MCF 10A (cell line): ENCODE measurements at regions of chr1 and their contacts with region 1.

Region 1: GRCh38 chr1:233326811-233327650 is 493 bp upstream of the MAP3K21 start:
- DNase-seq: peak; percentile 100
- H3K4me3 Mint-ChIP-seq: peak overlapping the region; percentile 87
- H3K27ac Mint-ChIP-seq: peak overlapping the region; percentile 58
- H3K4me1 Mint-ChIP-seq: peaks cover 39% of the 10 kb centered on the region
- H3K27me3 Mint-ChIP-seq: no peaks in the 10 kb centered on the region
- CTCF ChIP-seq: no peak

Region 2: DNA sequence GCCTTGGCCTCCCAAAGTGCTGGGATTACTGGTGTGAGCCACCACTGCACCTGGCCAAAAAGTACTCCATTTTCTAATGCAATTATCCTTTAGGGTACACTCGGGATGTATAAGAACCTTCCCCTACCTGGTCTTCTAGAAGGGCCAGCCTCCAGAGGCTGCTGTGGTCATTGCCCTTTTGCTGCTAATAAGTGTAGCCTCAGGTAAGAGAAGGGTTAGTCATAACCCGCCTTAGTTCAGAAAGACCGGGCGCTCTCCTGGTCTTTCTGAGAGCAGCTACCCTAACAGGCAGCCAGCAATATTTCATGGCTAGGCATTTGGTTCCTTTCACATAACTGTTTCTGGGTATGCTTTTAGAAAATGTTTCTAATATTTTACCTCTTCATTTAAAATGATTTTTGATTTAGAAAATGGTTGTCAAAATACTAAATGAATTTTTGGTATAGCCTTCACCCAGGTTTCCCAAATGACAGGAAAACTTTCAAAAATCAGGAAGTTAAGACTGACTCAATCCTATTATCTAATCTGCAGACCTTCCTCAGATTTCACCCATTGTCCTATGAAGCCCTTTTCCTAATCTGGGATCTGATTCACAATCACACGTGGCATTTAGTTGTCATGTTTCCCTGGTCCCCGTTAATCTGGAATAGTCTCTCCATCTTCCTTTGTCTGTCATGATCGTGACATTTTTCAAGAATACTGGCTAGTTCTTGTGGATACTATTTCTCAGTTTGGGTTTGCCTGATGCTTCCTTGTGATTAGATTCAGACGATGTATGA is 1176.1 kb before region 1 on chr1:
- CTCF ChIA-PET with region 1: no interaction called
- POLR2A ChIA-PET with region 1: no interaction called
- intact Hi-C with region 1: no loop called
- DNase-seq: peak; percentile 46
- H3K4me3 Mint-ChIP-seq: no peak overlapping the region
- H3K27ac Mint-ChIP-seq: no peak overlapping the region
- H3K4me1 Mint-ChIP-seq: peaks cover 10% of the 10 kb centered on the region
- H3K27me3 Mint-ChIP-seq: no peaks in the 10 kb centered on the region
- CTCF ChIP-seq: no peak

Region 3: DNA sequence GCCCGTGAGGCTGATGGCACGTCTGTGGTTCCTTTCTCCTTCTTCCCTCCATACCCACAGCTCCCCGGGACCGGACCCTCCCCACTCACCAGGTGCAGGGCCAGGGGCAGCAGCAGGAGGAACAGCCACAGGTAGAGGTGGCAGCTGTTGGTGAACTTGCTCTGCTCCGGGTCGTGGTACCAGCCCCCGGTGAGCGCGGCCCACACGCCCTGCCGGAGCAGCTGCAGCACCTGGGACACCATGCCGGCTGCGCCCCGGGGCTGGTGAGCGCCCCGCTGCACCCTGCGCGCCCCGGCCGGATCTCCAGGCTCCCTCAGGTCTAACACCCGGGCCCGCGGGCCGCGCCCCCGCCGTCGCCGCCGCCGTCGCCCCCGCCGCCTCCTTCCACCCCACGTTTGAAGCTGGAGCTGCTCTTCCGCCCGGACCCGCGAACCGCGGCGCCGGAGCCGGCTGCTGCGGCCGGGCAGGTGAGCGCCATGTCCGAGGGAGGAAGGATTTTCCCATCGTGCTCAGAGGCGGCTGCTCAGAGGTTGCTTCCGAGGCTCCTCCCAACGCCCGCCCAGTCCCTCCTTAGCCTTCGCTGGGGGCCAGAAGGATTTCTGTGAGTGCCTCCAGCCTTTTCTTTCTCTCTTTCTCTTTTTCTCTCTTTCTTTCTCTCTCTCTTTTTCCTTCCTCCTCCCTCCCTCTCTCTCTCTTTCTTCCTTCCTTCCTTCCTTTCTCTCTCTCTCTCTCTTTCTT is 31.6 kb before region 1 on chr1 and contains the start of gene PCNX2:
- CTCF ChIA-PET with region 1: interaction called, 4 read pairs
- POLR2A ChIA-PET with region 1: interaction called, 129 read pairs
- intact Hi-C with region 1: no loop called
- DNase-seq: peak; percentile 88
- H3K4me3 Mint-ChIP-seq: peak within 1 kb of the TSS; percentile 81
- H3K27ac Mint-ChIP-seq: peak within 1 kb of the TSS; percentile 68
- H3K4me1 Mint-ChIP-seq: peaks cover 28% of the 10 kb centered on the region
- H3K27me3 Mint-ChIP-seq: no peaks in the 10 kb centered on the region
- CTCF ChIP-seq: no peak
- total RNA-seq, gene PCNX2: 80.5 and 85.3 TPM in 2 replicates

Region 4: GRCh38 chr1:233341117-233341516 is 14.1 kb after region 1 on chr1:
- CTCF ChIA-PET with region 1: interaction called, 4 read pairs
- POLR2A ChIA-PET with region 1: interaction called, 82 read pairs
- intact Hi-C with region 1: no loop called
- DNase-seq: peak; percentile 50
- H3K4me3 Mint-ChIP-seq: no peak overlapping the region
- H3K27ac Mint-ChIP-seq: no peak overlapping the region
- H3K4me1 Mint-ChIP-seq: peaks cover 12% of the 10 kb centered on the region
- H3K27me3 Mint-ChIP-seq: no peaks in the 10 kb centered on the region
- CTCF ChIP-seq: no peak

Region 5: GRCh38 chr1:233355841-233356704 is 29.0 kb after region 1 on chr1:
- CTCF ChIA-PET with region 1: interaction called, 3 read pairs
- POLR2A ChIA-PET with region 1: interaction called, 14 read pairs
- intact Hi-C with region 1: no loop called
- DNase-seq: no peak
- H3K4me3 Mint-ChIP-seq: no peak overlapping the region
- H3K27ac Mint-ChIP-seq: no peak overlapping the region
- H3K4me1 Mint-ChIP-seq: peaks cover 6% of the 10 kb centered on the region
- H3K27me3 Mint-ChIP-seq: no peaks in the 10 kb centered on the region
- CTCF ChIP-seq: no peak

Region 6: GRCh38 chr1:233386336-233386735 is 59.3 kb after region 1 on chr1:
- CTCF ChIA-PET with region 1: interaction called, 4 read pairs
- POLR2A ChIA-PET with region 1: interaction called, 13 read pairs
- intact Hi-C with region 1: no loop called
- DNase-seq: peak; percentile 91
- H3K4me3 Mint-ChIP-seq: no peak overlapping the region
- H3K27ac Mint-ChIP-seq: no peak overlapping the region
- H3K4me1 Mint-ChIP-seq: peaks cover 6% of the 10 kb centered on the region
- H3K27me3 Mint-ChIP-seq: no peaks in the 10 kb centered on the region
- CTCF ChIP-seq: no peak

Region 7: GRCh38 chr1:233554037-233554436 is 227.0 kb after region 1 on chr1:
- CTCF ChIA-PET with region 1: no interaction called
- POLR2A ChIA-PET with region 1: no interaction called
- intact Hi-C with region 1: no loop called
- DNase-seq: no peak
- H3K4me3 Mint-ChIP-seq: no peak overlapping the region
- H3K27ac Mint-ChIP-seq: no peak overlapping the region
- H3K4me1 Mint-ChIP-seq: no peaks in the 10 kb centered on the region
- H3K27me3 Mint-ChIP-seq: peaks cover 15% of the 10 kb centered on the region
- CTCF ChIP-seq: no peak